ENCODE measurements at regions of chr6 and their contacts with region 1.

Region 1: DNA sequence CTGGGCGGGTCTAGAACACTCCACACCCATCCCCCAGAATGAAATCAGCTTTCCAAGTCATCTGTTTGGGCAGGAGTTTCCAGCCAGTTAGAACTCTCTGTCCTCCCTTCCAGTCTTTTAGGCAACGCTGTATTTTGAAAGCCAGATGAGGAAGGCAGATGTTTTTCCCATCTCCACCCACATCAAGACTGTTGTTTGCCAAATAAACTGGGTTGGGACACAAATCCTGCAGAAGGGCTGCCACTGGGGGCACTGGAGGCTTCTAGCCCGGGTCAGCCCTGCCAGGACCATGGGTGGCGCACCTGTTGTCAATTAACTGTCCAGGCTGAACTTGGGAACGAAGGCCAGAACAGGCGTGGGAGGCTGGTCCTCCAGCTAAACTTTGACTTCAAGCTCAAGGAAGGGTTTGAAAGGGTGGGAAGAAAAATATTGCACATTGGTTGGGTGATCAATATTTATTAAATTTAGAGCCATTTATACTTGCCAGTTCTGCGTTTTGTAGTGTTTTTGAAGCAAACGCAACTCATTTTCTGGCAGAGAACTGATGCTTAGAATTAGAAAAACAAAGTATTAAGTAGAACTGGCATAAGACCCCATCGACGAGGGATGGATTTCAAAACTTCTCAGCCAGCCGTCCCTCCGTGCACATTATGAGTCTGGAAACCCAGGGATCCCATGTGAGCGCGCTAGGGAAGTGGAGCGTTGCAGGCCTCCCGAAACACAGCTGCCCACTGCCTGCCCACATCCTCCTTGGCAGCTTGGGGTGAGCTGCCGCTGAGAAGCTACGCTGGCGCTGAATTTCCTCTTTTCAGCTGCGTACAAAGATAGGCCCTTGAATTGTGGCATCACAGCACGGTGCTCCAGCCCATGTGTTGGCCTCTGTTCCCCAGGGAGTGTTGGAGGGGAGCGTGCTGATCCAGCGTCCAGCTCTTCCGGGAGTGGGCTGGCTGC is 297.4 kb downstream of the QKI start:
- DNase-seq: peak; percentile 91
- ATAC-seq: peak; percentile 85

Region 2: GRCh38 chr6:163585932-163586437 is 125.9 kb before region 1 on chr6:
- intact Hi-C with region 1: loop called (anchors 5 kb)
- DNase-seq: no peak
- ATAC-seq: peak; percentile 85

Region 3: GRCh38 chr6:163620670-163621330 is 91.1 kb before region 1 on chr6:
- intact Hi-C with region 1: no loop called
- DNase-seq: no peak
- ATAC-seq: no peak

Region 4: DNA sequence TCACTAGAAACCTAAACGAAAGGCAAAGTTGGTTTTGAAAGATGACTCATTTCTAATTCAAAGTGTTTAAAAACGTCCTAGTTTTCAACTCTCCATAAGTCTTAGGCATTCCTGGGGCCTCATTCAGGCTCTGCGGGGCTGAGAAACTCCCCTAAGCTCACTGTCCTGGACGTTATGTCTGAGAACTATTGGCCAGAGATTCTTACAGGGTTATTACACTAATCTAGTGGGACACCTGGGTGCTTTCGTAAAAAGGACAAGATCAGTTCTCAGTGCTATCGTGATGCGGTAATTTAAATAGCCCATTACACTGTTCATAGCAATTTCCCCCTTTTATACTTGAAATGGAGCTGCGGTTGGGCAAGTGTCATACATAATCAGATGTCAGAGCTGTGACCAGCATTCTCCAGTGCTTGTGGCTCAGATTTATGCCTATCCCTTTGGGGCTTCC is 16.5 kb before region 1 on chr6:
- intact Hi-C with region 1: no loop called
- DNase-seq: no peak
- ATAC-seq: no peak

Region 5: DNA sequence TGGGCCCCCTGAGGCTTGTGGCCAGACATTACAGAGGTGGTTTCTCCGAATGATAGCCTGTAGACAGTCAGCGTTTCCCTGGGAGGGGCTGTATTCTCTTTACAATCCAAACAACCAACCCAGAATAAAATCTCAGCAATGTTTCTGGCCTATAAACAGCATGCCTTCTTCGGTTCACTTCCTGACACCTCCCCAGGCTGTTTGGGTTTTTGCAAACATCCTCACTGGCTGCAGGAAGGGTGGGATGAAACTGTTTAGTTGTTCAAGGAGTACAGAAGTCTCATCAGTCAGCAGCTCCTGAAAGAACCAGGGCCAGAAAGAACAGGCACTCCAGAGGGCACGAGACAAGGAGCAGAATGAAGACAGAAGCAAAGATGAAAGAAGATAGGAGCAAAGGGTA is 52.7 kb after region 1 on chr6:
- intact Hi-C with region 1: loop called (anchors 1 kb)
- DNase-seq: no peak
- ATAC-seq: no peak

Region 6: DNA sequence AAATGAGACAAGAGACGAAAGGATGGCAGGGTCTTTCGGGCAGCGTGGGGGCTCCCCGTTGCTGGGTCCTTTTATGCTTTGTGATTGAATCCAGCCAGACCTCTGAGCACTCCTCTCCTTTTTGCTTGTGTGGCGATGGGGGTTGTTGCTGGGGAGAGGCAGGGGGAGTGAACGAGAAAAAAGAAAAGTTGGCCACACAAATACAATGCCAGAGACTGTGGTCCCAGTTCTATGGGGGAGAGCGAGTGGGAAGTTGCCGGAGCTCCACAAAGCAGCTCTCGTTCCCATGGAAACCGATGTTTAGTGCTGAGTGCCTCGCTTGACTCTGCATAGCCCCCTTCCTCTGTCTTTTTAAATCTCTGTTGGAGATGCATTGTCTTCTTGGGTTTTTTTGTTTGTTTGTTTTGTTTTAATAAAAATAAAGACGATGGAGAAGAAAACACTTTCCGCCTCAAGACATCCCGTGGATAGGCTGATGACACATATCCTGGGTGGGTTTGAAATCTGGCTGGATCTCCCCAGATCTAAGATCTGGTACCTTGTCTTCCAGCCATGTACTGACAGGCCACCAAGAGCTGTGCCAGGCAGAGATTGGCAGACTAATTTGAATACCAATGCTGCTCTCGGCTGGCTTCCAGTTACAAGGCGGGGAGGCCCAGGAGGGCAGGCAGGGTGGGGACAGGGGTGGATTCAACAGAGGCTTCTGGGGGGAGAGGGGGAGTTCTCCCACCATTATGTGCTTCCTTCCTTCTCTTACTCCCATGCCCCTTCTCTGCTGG is 231.9 kb after region 1 on chr6:
- intact Hi-C with region 1: loop called (anchors 5 kb)
- DNase-seq: no peak
- ATAC-seq: peak; percentile 56

Measured in Right ventricle myocardium inferior (tissue), 1 donor.